Activated T-helper 1 cell treated with anti-CD3 and anti-CD28 coated beads, Interleukin-12 subunit alpha, Interleukin-12 subunit beta, Interleukin-2, Interleukin-4 antibody, amounts not matched to agents 30 ng/mL and 10 ng/mL and 1 ng/mL, durations not matched to agents 14 hours and 24 hours and 36 hours (primary cell): ENCODE measurements at regions of chr5 and their contacts with region 1.

Region 1: DNA sequence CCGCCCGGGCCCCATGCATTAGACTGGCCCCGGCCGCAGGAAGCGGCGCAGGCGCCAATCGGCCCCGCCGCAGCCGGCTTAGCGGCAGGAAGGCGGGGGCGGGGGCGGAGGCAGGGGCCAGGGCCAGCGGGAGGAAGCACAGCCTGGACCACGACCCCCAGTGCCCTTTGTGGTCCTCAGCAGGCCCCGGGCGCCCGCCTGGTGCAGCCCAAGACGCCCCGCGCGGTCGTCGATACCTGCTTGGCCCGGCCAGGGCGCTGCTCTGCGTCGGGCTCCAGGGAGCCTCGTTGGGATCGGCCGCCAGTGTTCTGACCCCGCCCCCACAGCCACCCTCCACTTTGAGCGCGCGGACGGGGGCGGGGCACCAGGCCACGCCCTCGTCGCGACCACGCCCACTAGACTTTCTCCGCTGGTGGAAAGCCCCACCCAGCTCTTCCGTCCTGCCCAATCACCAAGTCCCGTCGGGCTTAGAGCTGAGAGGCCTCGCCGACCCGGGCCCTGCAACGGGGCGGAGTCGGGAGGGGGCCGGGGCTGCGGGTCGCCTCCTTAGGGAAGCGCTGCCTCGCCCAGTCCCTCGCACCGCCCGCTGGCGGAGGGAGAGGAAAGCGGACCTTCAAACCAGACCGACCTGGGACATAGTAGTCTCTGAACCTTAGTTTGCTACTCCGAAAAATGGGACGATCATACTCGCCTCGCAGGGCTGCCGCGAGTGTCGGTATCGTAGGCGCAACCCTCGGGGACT is at the start of gene PDLIM7:
- DNase-seq: peak; percentile 92
- H3K4me3 Mint-ChIP-seq: peak within 1 kb of the TSS; percentile 78
- H3K27ac Mint-ChIP-seq: peak within 1 kb of the TSS; percentile 83
- H3K4me1 Mint-ChIP-seq: peaks cover 43% of the 10 kb centered on the region
- H3K27me3 Mint-ChIP-seq: peaks cover 16% of the 10 kb centered on the region
- total RNA-seq, gene PDLIM7: 49.2 and 49.9 TPM in 2 replicates

Region 2: DNA sequence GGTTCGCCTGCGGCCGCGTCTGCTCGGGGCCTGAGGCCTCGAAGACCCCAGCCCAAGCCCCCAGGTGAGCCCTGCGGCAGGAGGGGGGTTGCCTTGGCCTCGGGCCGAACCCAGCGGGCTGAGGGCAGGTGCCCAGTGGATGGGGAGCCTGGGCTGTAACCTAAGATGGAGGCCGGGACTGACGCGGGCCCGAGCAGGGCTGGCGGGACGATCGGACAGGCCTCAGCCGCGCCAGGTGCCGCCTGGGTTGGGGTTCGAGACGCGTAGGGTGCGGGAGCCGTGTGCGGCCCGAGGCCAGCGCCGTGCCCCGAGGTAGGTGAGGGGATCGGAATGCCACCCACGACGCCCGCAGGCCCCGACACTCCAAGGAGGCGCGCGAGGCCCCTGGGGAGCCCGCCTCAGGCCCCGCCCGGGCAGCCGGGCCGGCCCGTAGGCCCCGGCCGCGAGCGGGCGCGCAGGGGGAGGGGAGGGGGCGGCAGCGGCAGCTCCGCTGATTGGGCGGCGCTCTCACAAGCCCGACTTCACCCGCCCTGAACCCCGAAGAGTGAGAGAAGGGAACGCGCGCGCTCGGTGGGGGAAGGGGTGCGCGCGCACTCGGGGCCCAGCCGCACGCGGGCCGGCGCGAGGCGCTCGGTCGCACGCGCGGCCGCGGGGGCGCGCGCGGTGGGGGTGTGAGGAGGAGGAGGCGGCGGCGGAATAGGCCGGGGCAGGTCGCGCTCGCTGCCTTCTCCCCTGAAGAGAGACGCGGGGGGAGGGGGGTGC is 364.2 kb before region 1 on chr5 and contains the start of gene NSD1:
- intact Hi-C with region 1: loop called (anchors 5 kb)
- DNase-seq: peak; percentile 90
- H3K4me3 Mint-ChIP-seq: peak within 1 kb of the TSS; percentile 93
- H3K27ac Mint-ChIP-seq: peak within 1 kb of the TSS; percentile 86
- H3K4me1 Mint-ChIP-seq: peaks cover 48% of the 10 kb centered on the region
- H3K27me3 Mint-ChIP-seq: no peaks in the 10 kb centered on the region
- total RNA-seq, gene NSD1: 108 and 112 TPM in 2 replicates

Region 3: DNA sequence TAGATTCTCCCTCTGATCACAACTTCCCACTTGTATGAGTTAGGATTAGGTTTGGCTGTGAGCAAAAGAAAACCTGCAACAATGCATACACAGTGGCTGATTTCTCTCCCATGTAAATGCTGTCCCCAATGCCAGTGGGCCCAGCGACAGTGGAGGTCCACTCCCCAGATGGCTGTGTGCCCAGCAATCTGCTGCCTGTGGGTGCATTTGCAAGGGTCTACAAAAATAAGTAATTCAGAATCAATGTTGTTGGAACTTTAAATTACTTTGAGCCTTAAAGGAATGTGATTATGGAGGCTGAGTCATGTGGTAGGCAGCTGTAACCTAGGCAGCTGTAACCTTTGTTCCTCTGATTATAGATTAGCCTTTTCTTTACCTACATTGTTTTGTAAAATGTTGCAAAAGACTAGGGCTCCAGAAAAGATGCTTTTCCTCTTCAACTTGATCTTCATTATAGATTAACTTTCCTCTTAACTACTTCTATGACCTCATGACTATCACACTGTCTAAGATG is 171.5 kb before region 1 on chr5:
- intact Hi-C with region 1: no loop called
- DNase-seq: no peak
- H3K4me3 Mint-ChIP-seq: no peak overlapping the region
- H3K27ac Mint-ChIP-seq: no peak overlapping the region
- H3K4me1 Mint-ChIP-seq: peaks cover 9% of the 10 kb centered on the region
- H3K27me3 Mint-ChIP-seq: no peaks in the 10 kb centered on the region

Region 4: GRCh38 chr5:177362610-177363507 is 134.6 kb before region 1 on chr5:
- intact Hi-C with region 1: loop called (anchors 1 kb)
- DNase-seq: peak; percentile 56
- H3K4me3 Mint-ChIP-seq: peak overlapping the region; percentile 67
- H3K27ac Mint-ChIP-seq: peak overlapping the region; percentile 56
- H3K4me1 Mint-ChIP-seq: peaks cover 65% of the 10 kb centered on the region
- H3K27me3 Mint-ChIP-seq: peaks cover 2% of the 10 kb centered on the region

Region 5: GRCh38 chr5:177412603-177413233 is 84.7 kb before region 1 on chr5:
- intact Hi-C with region 1: no loop called
- DNase-seq: no peak
- H3K4me3 Mint-ChIP-seq: no peak overlapping the region
- H3K27ac Mint-ChIP-seq: no peak overlapping the region
- H3K4me1 Mint-ChIP-seq: peaks cover 25% of the 10 kb centered on the region
- H3K27me3 Mint-ChIP-seq: peaks cover 2% of the 10 kb centered on the region

Region 6: DNA sequence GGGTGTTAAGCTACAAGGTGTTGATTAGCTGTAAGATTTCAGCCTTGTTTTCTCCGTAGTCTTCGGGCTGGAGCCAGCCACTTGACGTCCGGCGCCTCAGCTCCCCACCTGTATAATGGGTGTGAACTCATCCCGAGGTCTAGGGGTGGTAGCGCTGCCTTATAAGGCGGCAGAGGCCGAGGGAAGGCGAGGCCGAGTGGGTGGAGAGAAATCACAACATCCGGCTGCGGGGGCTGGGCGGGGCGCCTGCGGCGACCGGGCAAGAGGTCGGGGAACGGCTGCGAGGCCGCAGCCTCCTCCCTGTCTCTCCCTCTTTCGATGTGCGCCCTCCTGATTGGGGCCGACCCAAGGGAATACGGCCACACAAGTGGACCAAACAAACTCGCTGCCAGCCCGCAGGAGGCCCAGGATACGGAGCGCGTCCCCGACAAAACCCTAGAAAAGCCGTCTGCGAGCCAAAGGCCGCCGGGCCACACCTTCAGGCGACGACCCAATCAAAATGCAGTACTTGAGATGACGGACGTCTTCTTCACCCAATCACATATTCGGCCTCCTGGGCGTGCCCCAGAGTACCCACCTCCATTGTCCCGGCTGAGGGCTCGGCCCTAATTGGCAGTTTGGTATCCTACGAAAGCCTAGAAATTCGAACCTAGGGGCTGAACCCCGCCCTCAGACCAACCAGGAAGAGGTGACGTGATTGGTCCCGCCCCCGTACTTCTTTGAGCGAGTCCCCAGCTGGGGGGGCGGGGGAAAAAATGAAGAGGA is 71.5 kb before region 1 on chr5:
- intact Hi-C with region 1: loop called (anchors 1 kb)
- DNase-seq: peak; percentile 99
- H3K4me3 Mint-ChIP-seq: peak overlapping the region; percentile 86
- H3K27ac Mint-ChIP-seq: peak overlapping the region; percentile 94
- H3K4me1 Mint-ChIP-seq: peaks cover 51% of the 10 kb centered on the region
- H3K27me3 Mint-ChIP-seq: no peaks in the 10 kb centered on the region

Region 7: GRCh38 chr5:177478711-177479646 is 18.5 kb before region 1 on chr5:
- intact Hi-C with region 1: loop called (anchors 2 kb)
- DNase-seq: no peak
- H3K4me3 Mint-ChIP-seq: no peak overlapping the region
- H3K27ac Mint-ChIP-seq: peak overlapping the region; percentile 96
- H3K4me1 Mint-ChIP-seq: peaks cover 47% of the 10 kb centered on the region
- H3K27me3 Mint-ChIP-seq: peaks cover 10% of the 10 kb centered on the region